Right ventricle myocardium inferior (tissue), 1 donor: ENCODE measurements at regions of chr17 and their contacts with region 1.

Region 1: GRCh38 chr17:3012926-3013581 is 50.4 kb downstream of the OR1D5 start:
- DNase-seq: no peak
- ATAC-seq: peak; percentile 86

Region 2: GRCh38 chr17:2828397-2829038 is 184.5 kb before region 1 on chr17:
- intact Hi-C with region 1: loop called (anchors 1 kb)
- DNase-seq: peak; percentile 87
- ATAC-seq: peak; percentile 68